Head of caudate nucleus (tissue), 42 donors: ENCODE measurements at regions of chr3 and their contacts with region 1.

Region 1: GRCh38 chr3:149717391-149718056 is 34.8 kb downstream of the COMMD2 start:
- DNase-seq: peak in 31 of 42 donors; percentile 15 to 84 (median 61)

Region 2: DNA sequence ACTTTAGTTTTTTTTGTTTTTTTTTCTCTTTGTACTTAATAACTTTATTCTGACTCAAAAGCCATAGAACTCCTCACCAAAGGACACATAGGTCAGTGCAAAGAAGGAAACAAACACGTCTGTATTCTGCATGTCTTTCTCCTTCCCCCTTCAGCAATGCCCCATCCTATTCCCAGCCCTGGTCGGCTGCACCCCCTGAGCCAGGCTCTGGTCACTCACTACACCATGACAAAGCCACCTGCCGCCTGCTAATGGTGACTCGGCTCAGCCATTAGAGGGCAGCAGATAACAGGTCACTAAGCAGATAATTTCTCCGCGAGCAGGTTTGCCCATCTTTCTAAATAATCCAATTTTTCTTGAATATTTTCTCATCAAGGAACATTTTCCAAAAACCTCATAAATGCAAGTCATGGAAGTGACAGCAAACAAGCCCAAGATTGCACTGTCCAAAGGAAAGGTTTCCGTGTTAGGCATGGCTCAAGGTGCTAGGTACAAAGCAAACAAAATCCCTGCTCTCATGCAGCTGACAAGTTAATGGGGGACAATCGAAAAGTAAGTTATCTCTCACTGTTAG is 205.2 kb before region 1 on chr3:
- intact Hi-C with region 1: loop called (anchors 5 kb)
- DNase-seq: peak; percentile 54 to 88 (median 69)

Region 3: GRCh38 chr3:149527531-149528339 is 189.8 kb before region 1 on chr3:
- intact Hi-C with region 1: loop called (anchors 5 kb)
- DNase-seq: peak in 12 of 42 donors; percentile 22 to 66 (median 36)

Region 4: GRCh38 chr3:150936693-150937092 is 1219.2 kb after region 1 on chr3:
- intact Hi-C with region 1: no loop called
- DNase-seq: no peak